ENCODE measurements at regions of chr11 and their contacts with region 1.

Region 1: GRCh38 chr11:28107748-28108618 is at the starts of genes KIF18A and METTL15:
- DNase-seq: peak; percentile 94 to 99 (median 96)
- ATAC-seq: peak; percentile 89
- H3K4me3 ChIP-seq: peak within 1 kb of the TSS; percentile 66
- H3K4me3 Mint-ChIP-seq: peak within 1 kb of the TSS; percentile 98
- H3K27ac ChIP-seq: peak within 1 kb of the TSS; percentile 75 to 92
- H3K27ac Mint-ChIP-seq: peak within 1 kb of the TSS; percentile 98
- H3K4me1 ChIP-seq: peaks cover 24% of the 10 kb centered on the region
- H3K4me1 Mint-ChIP-seq: peaks cover 73% of the 10 kb centered on the region
- H3K27me3 ChIP-seq: no peaks in the 10 kb centered on the region
- H3K27me3 Mint-ChIP-seq: no peaks in the 10 kb centered on the region
- CTCF ChIP-seq: no peak
- total RNA-seq, gene KIF18A: 3.4 to 5.3 TPM
- total RNA-seq, gene METTL15: 3.5 to 4.4 TPM

Region 2: DNA sequence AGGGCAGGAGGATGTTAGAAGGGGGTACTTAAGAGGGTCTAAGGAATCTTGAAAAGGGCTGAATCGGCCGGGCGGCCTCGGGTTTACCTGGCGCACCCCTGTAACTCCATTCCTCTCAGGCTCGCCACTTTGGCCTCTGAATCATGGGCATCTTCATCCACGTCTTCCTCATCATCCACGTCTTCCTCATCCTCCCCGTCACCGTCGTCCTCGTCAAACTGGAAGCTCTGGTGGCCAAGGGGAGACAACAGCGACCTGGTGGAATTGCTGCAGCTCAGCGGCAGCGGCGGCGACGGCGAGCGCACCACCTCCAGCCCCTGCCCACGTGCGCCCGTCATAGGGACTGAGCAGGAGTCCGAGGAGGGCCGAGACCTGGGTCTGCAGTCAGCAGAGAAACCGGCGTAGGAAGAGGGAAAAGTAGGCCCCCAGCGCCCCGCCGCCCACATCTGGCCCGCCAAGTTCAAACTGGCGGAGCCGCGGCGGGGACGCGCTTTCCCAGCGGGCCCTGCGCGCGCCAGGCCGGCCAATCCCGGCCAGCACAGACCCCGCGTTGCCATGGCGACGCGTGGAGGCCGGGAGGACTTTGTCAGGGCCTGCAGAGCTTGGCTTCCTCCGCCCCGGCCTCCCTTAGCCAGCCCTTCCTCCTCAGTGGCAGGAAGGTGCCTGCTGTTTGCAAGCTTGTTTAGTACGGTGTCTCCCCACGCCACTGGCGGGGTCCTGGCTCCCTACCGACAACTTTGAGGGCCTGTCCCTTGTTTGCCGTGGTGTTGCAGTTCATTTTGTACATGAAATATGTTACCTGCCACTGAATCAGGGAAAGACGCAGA is 745.0 kb before region 1 on chr11 and contains the start of gene CCDC34:
- CTCF ChIA-PET with region 1: no interaction called
- POLR2A ChIA-PET with region 1: no interaction called
- intact Hi-C with region 1: loop called in 1 of 2 experiments (anchors 10 kb)
- DNase-seq: peak; percentile 70 to 96 (median 87)
- ATAC-seq: peak; percentile 98
- H3K4me3 ChIP-seq: peak within 1 kb of the TSS; percentile 83
- H3K4me3 Mint-ChIP-seq: peak within 1 kb of the TSS; percentile 81
- H3K27ac ChIP-seq: no peak within 1 kb of the TSS
- H3K27ac Mint-ChIP-seq: peak within 1 kb of the TSS; percentile 72
- H3K4me1 ChIP-seq: peaks cover 13% of the 10 kb centered on the region
- H3K4me1 Mint-ChIP-seq: peaks cover 30% of the 10 kb centered on the region
- H3K27me3 ChIP-seq: no peaks in the 10 kb centered on the region
- H3K27me3 Mint-ChIP-seq: no peaks in the 10 kb centered on the region
- CTCF ChIP-seq: no peak
- total RNA-seq, gene CCDC34: 1.3 to 1.6 TPM

Region 3: GRCh38 chr11:27830206-27830605 is 277.8 kb before region 1 on chr11:
- CTCF ChIA-PET with region 1: no interaction called
- POLR2A ChIA-PET with region 1: no interaction called
- intact Hi-C with region 1: no loop called
- DNase-seq: no peak
- ATAC-seq: no peak
- H3K4me3 ChIP-seq: no peak overlapping the region
- H3K4me3 Mint-ChIP-seq: no peak overlapping the region
- H3K27ac ChIP-seq: no peak overlapping the region
- H3K27ac Mint-ChIP-seq: no peak overlapping the region
- H3K4me1 ChIP-seq: no peaks in the 10 kb centered on the region
- H3K4me1 Mint-ChIP-seq: no peaks in the 10 kb centered on the region
- H3K27me3 ChIP-seq: no peaks in the 10 kb centered on the region
- H3K27me3 Mint-ChIP-seq: peaks cover 3% of the 10 kb centered on the region
- CTCF ChIP-seq: no peak

Region 4: DNA sequence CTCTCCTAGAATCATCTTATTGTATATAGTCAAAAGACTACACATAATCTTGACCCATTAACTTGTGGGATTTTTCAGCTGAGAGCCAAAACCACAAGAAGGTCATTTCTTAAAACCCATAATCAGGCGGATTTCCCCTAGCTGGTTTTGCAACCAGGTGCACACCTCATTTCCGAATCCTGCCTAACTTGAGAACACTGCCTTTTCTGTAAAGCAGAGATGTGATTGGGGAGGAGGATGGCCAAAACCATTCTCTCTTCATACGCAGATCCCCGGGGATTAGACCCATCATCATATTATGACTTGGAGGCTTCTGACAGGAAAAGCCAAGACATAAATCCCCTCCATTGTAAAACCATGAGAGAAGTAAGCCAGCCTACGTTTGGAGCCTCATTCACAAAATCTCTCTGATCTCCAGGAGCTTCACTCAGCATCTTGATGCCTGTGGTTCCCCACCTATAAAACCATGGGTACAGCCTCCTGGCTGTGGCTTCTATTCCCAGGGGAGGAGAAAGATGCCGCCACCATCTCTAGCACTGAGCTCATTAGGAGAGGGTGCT is 191.4 kb before region 1 on chr11:
- CTCF ChIA-PET with region 1: no interaction called
- POLR2A ChIA-PET with region 1: no interaction called
- intact Hi-C with region 1: no loop called
- DNase-seq: no peak
- ATAC-seq: no peak
- H3K4me3 ChIP-seq: no peak overlapping the region
- H3K4me3 Mint-ChIP-seq: no peak overlapping the region
- H3K27ac ChIP-seq: no peak overlapping the region
- H3K27ac Mint-ChIP-seq: no peak overlapping the region
- H3K4me1 ChIP-seq: no peaks in the 10 kb centered on the region
- H3K4me1 Mint-ChIP-seq: no peaks in the 10 kb centered on the region
- H3K27me3 ChIP-seq: no peaks in the 10 kb centered on the region
- H3K27me3 Mint-ChIP-seq: peaks cover 5% of the 10 kb centered on the region
- CTCF ChIP-seq: no peak

Region 5: GRCh38 chr11:28049338-28050216 is 58.4 kb before region 1 on chr11:
- CTCF ChIA-PET with region 1: no interaction called
- POLR2A ChIA-PET with region 1: no interaction called
- intact Hi-C with region 1: loop called in 1 of 2 experiments (anchors 10 kb)
- DNase-seq: no peak
- ATAC-seq: no peak
- H3K4me3 ChIP-seq: no peak overlapping the region
- H3K4me3 Mint-ChIP-seq: no peak overlapping the region
- H3K27ac ChIP-seq: no peak overlapping the region
- H3K27ac Mint-ChIP-seq: no peak overlapping the region
- H3K4me1 ChIP-seq: no peaks in the 10 kb centered on the region
- H3K4me1 Mint-ChIP-seq: no peaks in the 10 kb centered on the region
- H3K27me3 ChIP-seq: no peaks in the 10 kb centered on the region
- H3K27me3 Mint-ChIP-seq: no peaks in the 10 kb centered on the region
- CTCF ChIP-seq: no peak

Measured in CD4-positive, alpha-beta T cell (primary cell).